ENCODE measurements at regions of chr1 and their contacts with region 1.

Region 1: GRCh38 chr1:181105134-181106021 is 16.9 kb downstream of the IER5 start:
- DNase-seq: no peak
- H3K4me3 ChIP-seq: peak overlapping the region; percentile 78
- H3K27me3 ChIP-seq: no peaks in the 10 kb centered on the region
- CTCF ChIP-seq: no peak

Region 2: DNA sequence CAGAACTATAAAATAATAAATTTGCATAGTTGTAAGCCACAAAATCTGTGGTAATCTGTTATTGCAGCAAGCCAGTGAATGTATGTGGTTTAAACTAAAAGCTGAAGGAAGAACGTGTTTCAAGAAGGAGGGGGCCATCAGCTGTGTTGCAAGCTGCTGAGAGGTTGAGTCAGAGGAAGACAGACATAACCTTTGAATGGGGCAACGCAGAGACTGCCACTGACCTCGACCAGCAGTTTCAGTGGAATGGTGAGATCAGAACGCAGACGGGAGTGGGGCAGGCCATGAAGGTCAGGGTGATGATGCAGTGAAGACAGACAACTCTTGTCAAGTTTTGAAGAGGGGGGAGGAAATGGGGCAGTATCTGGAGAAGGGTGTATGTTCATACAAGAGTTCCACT is 973.9 kb before region 1 on chr1:
- CTCF ChIA-PET with region 1: no interaction called
- POLR2A ChIA-PET with region 1: interaction called, 14 read pairs
- DNase-seq: peak; percentile 52
- H3K4me3 ChIP-seq: no peak overlapping the region
- H3K27me3 ChIP-seq: no peaks in the 10 kb centered on the region
- CTCF ChIP-seq: no peak

Region 3: DNA sequence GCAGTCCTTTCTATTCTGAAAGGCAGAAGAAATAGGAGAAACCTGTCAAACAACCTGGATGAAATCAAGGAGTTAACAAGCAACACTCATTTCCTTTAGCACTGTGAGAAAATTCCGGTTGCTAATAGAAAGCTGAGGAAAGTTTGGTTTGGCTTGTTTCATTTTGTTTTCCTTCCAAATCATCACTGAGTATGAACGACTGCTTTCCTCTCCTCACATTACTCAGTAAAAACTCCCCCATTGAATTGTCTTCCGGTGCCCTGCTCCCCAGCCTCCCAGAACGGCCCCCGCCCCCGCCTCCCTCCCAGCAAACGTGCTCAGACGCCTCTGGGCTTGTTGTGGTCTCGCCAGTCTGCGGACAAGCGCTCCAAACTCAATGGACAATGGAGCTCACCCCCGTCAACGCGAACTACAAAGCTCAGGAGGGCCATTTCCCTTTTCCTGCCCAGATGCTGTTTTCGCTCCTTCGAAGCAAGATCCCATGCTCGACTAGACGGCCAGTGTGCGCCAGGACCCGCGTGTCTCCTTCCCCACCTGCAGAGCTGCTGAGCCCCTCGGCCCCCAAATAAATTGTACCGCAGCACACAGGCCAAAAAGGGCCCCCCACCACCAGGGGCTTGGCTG is 83.5 kb before region 1 on chr1:
- CTCF ChIA-PET with region 1: interaction called, 3 read pairs
- POLR2A ChIA-PET with region 1: interaction called, 18 read pairs
- DNase-seq: no peak
- H3K4me3 ChIP-seq: peak overlapping the region; percentile 84
- H3K27me3 ChIP-seq: no peaks in the 10 kb centered on the region
- CTCF ChIP-seq: no peak

Region 4: DNA sequence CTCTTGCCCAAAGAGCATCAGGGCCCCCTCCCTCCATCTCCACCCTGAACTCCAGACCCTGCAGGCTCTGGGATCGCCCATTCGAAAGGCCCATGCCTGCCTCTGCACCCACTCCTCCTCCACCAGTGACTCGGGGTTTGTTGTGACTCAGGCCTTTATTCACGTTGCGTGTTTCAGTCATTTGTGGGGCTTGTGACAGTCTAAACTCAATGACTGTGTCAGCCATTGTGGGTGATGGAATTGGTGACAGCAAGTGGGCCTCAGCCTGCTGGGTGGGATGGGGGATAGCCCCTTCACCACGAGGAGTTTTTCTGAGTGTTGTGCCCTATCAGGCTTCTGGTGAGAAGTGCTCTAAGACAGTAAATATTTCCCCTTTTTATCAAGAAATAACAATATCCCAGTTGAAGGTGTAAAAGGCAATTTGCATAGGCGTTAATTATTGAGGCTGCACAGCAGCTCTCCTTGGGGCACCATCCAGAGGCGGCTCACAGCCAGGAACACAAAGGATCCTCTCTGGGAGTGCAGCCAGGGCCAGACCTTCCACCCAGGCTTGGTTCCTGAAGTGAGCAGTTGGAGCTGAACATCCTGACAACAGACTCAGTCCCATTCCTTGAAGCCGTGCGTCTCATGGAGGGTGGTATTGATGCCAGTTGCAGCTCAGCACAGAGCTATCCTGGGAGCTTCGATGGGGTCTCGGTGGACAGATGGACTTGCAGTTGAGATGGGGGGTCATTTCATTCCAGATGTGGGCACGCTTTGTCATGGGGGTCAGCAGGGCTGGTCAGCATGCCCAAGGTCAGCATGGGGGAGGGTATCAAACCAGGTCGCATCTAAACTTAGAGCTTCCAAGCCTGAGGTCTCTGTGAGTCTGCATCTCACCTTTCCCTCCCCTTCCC is 242.4 kb after region 1 on chr1:
- CTCF ChIA-PET with region 1: no interaction called
- POLR2A ChIA-PET with region 1: no interaction called
- DNase-seq: no peak
- H3K4me3 ChIP-seq: no peak overlapping the region
- H3K27me3 ChIP-seq: no peaks in the 10 kb centered on the region
- CTCF ChIP-seq: no peak

Region 5: DNA sequence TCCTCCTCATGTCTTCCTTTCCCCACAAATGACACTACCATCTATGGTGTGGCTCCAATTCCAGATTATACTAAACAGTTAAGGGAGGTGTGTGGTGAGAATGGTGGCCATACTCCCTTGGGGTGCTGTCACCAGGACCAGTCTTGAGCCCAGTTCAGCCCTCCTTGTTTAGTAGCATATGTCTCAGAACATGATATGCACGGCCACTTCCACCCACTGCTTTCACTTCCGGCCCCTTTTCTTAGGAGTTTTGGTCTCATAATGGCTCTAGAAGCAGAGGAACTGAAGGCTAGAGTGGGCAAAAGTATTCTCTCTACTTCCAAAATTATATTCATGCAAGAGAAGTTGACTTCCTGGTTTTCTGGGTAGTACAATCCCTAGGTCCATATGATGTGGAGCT is 332.6 kb after region 1 on chr1:
- CTCF ChIA-PET with region 1: no interaction called
- POLR2A ChIA-PET with region 1: no interaction called
- DNase-seq: no peak
- H3K4me3 ChIP-seq: no peak overlapping the region
- H3K27me3 ChIP-seq: no peaks in the 10 kb centered on the region
- CTCF ChIP-seq: no peak

Measured in BJ (cell line).